Activated CD4-positive, alpha-beta memory T cell treated with anti-CD3 and anti-CD28 coated beads, Interleukin-2, amount 10 ng/mL, durations not matched to agents 7 days and 5 days (primary cell): ENCODE measurements at regions of chr12 and their contacts with region 1.

Region 1: DNA sequence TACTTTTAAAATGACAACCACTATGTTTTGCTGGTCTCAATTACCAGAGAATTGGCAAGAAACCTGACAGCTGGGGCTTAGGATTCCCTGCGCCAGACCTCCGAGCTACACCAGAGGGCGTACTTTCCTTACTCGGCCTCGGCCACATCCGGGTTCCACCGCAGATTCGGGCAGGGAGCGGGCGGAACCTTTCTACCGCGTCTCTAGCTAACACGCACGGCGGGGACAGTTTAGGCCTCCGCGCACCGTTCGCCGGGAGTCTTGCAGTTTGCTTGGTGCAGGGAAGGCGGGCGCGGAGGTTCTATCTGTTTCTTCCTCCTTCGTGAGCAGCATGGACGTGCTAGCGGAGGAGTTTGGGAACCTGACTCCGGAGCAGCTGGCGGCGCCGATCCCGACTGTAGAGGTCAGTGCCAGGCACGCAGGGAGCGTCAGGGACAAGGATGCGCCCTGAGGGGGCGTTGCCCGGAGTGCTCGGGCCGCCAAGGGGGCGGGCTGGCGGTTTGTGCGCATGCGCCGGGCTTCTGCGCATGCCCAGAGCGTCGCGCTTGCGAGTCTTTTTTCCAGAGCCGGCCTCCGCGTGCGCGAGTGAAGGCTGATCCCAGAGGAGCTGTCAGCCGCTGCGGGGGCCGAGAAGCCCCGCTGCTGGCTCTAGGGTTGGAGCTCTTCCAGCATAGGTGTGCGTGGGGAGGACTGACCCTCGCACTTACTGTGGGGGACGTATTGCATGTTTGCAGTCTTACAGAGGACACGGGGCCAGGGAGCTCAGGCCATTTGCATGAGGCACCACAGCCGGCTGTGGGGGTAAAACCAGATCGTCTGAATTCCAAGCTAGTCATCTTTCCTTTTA is at the start of gene POLR3B:
- DNase-seq: peak; percentile 97
- H3K4me3 Mint-ChIP-seq: peak within 1 kb of the TSS; percentile 87
- H3K27ac Mint-ChIP-seq: peak within 1 kb of the TSS; percentile 88
- H3K4me1 Mint-ChIP-seq: peaks cover 20% of the 10 kb centered on the region
- H3K27me3 Mint-ChIP-seq: no peaks in the 10 kb centered on the region
- total RNA-seq, gene POLR3B: 3.7 to 4.4 TPM

Region 2: DNA sequence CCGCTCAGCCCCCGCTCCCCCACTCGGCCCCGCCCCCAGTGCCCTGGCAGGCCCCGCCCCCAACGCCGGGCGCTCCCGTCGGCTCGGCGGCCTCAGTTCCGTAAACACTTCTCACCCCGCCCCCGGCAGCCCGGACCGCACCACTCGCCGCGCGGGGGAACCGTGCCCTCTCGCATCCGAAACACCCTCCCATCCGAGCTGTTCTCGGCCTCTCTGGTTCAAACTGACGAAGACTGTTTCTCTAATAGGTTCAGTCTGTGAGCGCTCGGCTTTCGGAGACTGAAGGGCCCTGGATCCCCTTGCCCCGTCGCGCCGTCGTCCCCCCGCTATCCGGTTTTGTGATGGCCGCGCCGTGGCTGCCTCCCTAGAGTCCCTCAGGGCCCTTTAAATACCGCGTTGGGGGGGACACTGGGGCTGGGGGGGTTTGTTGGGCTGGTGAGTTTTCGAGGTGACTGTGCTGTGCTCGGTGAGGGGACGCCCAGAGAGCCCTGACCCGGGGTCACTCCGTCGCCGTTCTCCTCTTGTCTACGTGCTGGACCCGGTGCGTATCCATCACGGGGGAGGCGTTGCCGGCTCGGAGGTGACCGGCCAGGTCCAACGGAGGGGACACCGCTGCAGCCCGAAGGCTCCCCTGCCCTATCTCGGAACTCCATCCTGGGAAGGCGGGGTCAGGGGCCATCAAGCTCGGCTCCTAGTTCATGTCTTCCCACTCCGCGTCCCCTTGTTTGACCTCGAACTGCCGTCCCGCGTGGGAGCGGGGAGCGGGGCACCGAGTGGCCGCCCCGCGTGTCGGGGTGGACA is 55.2 kb before region 1 on chr12 and contains the start of gene TCP11L2:
- CTCF ChIA-PET with region 1: interaction called, 17 read pairs
- POLR2A ChIA-PET with region 1: interaction called, 47 read pairs
- DNase-seq: peak; percentile 90
- H3K4me3 Mint-ChIP-seq: peak within 1 kb of the TSS; percentile 94
- H3K27ac Mint-ChIP-seq: peak within 1 kb of the TSS; percentile 98
- H3K4me1 Mint-ChIP-seq: peaks cover 35% of the 10 kb centered on the region
- H3K27me3 Mint-ChIP-seq: no peaks in the 10 kb centered on the region
- total RNA-seq, gene TCP11L2: 25.1 to 27.8 TPM

Region 3: GRCh38 chr12:106378788-106379187 is 21.0 kb after region 1 on chr12:
- CTCF ChIA-PET with region 1: interaction called, 24 read pairs
- POLR2A ChIA-PET with region 1: interaction called, 9 read pairs
- DNase-seq: no peak
- H3K4me3 Mint-ChIP-seq: no peak overlapping the region
- H3K27ac Mint-ChIP-seq: no peak overlapping the region
- H3K4me1 Mint-ChIP-seq: peaks cover 18% of the 10 kb centered on the region
- H3K27me3 Mint-ChIP-seq: no peaks in the 10 kb centered on the region

Region 4: DNA sequence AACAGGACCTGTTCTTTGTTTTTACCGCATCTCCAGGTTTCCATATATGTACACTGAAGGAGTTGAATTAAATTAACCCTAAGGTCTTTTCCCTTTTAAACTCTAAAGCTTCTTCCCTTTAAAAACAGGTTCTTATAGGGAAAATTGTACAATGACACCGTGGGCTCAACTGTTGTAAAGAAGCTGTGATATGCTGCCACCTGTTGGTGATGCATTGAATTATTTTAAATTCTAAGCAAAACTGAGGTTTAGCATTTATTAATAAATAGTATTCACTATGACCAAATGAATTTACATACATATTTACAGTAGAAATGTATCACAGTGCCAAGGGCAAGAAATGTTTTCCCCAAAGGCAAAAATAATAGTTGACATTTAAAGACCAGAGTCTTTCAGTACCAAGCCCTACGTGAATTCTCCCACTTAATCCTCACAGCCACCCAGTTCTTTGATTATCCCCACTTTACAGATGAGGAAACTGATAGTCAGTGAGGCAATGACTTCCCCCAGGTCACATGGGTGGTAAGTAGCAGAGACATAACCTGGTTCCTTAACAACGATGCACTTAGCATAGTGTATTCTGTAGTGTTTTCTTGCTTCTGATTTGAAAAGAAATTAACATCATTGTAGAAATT is 562.3 kb after region 1 on chr12:
- CTCF ChIA-PET with region 1: interaction called, 27 read pairs
- POLR2A ChIA-PET with region 1: interaction called, 4 read pairs
- DNase-seq: no peak
- H3K4me3 Mint-ChIP-seq: no peak overlapping the region
- H3K27ac Mint-ChIP-seq: no peak overlapping the region
- H3K4me1 Mint-ChIP-seq: peaks cover 9% of the 10 kb centered on the region
- H3K27me3 Mint-ChIP-seq: peaks cover 19% of the 10 kb centered on the region